Activated CD4-positive, alpha-beta memory T cell treated with anti-CD3 and anti-CD28 coated beads for 36 hours (primary cell): ENCODE measurements at regions of chr9 and their contacts with region 1.

Region 1: DNA sequence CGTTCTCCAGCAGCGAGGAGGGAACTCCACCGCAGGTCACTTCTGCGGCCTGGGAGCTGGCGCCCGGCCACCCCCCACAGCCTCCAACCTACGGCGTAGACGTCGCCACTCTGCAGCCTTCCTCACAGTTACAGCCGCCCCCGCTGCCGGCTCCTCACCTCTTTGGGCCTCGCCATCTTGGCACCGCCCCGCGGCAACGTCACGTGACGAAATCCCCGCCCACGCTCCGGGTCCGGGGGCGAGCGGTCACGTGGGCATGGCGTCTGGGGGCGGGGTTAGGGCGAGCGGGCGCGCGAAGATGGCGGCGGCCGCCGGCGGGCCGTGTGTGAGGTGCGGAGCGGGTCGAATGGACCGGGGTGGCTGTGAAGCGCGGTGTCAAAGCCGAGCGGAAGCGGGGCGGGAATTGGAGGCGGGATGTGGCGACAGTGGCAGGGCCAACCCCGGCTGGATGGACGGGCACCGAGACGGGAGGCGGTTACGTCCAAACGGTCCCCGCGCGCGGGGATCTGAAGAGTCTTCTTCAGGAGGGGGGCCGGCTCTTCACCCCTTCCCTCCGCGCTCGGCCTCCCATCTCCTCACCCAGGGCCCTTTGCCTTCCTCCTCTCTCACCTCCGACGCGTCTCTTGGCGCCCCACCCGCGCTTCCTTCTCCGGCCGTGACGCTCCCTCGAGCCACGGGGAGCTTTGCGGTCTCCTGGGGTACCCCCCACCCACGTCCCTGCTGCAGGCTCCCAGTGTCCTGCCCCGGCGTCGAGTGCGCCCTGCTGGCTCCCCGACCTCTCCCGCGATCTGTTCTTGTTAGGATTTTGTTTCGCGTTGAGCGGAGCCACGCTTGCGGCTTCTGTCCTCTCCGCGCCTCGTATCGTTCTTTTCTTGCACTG is at the starts of genes DOLK and NUP188:
- DNase-seq: peak; percentile 98
- H3K4me3 Mint-ChIP-seq: peak within 1 kb of the TSS; percentile 98
- H3K27ac Mint-ChIP-seq: peak within 1 kb of the TSS; percentile 98
- H3K4me1 Mint-ChIP-seq: peaks cover 27% of the 10 kb centered on the region
- H3K27me3 Mint-ChIP-seq: no peaks in the 10 kb centered on the region
- total RNA-seq, gene DOLK: 5.7 to 6.7 TPM
- total RNA-seq, gene NUP188: 121 to 124 TPM

Region 2: DNA sequence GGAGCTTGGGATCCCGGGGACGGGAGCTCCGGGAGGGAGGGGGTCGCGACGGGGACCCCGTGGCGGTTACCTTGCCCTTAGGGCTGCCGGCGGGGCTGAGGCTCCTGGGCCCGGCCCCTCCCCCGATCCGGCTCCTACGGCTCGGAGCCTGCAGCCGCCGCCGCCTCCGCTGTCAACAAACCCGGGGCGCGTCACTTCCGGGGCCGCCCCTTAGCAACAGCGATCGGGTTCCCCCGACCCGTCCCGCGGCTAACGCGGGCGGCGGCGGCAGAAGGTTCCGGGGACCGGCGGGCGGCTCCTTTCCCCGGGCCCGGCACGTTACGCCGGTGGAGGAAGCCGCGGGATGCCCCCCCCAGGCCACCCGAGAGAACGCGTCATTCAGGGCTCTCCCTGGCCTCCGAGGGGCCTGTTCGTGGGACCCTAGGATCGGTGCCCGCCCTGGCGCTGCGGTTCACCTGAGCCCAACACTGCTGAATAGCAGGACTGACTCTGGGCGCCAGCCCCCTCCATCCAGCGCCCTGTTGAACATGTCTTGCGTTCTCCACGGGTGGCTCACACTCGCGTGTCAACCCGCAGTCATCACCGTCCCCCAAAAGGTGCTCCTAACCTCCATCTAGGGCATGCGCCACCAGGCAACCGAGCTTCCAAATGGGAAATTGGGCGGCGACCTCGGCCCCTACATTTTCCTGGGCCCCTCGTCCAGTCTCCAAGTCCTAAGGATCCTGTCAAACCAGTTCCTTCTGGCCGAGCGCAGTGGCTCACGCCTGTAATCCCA is 175.7 kb before region 1 on chr9 and contains the start of gene ZER1:
- CTCF ChIA-PET with region 1: no interaction called
- POLR2A ChIA-PET with region 1: no interaction called
- intact Hi-C with region 1: loop called (anchors 5 kb)
- DNase-seq: peak; percentile 95
- H3K4me3 Mint-ChIP-seq: peak within 1 kb of the TSS; percentile 94
- H3K27ac Mint-ChIP-seq: peak within 1 kb of the TSS; percentile 82
- H3K4me1 Mint-ChIP-seq: peaks cover 17% of the 10 kb centered on the region
- H3K27me3 Mint-ChIP-seq: no peaks in the 10 kb centered on the region
- total RNA-seq, gene ZER1: 16.2 to 18.0 TPM

Region 3: GRCh38 chr9:129028192-129028957 is 80.7 kb after region 1 on chr9 and contains the start of gene SH3GLB2:
- CTCF ChIA-PET with region 1: no interaction called
- POLR2A ChIA-PET with region 1: no interaction called
- intact Hi-C with region 1: loop called (anchors 1 kb)
- DNase-seq: peak; percentile 97
- H3K4me3 Mint-ChIP-seq: peak within 1 kb of the TSS; percentile 84
- H3K27ac Mint-ChIP-seq: peak within 1 kb of the TSS; percentile 55
- H3K4me1 Mint-ChIP-seq: peaks cover 22% of the 10 kb centered on the region
- H3K27me3 Mint-ChIP-seq: no peaks in the 10 kb centered on the region
- total RNA-seq, gene SH3GLB2: 59.5 to 62.3 TPM

Region 4: DNA sequence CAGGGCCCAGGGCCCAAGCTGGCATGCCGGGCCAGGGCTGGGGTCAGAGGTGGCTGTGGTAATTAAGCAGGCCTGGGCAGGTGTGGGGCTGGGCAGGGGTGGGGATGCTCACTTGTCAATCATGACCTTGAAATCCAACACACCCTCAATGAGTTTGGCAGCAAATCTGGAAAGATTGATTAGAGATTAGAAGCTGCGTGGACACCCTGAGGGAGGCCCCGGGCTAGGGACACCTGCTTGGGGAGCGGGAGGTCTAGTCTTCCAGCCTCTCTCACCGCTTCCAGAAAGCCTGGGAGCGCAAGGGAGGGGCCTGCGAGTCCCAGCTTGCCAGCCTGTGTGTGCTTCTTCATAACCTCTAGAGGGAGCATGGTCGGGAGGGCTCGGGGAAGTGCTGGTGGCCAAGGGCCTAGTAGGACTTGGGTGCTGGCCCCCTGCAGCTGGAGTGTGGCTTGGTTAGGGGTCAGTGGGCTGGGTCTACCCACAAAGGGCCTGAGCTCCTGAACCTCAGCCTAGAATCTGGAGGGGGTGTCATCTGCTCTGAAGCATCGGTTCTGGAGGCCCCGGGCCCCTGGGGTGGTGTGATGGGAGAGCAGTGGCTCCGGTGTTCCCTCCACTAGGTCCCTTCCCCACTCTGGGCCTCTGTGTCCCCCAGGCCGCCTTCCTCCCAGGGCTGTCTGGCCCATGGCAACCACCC is 155.4 kb after region 1 on chr9:
- CTCF ChIA-PET with region 1: no interaction called
- POLR2A ChIA-PET with region 1: no interaction called
- intact Hi-C with region 1: no loop called
- DNase-seq: peak; percentile 30
- H3K4me3 Mint-ChIP-seq: no peak overlapping the region
- H3K27ac Mint-ChIP-seq: no peak overlapping the region
- H3K4me1 Mint-ChIP-seq: no peaks in the 10 kb centered on the region
- H3K27me3 Mint-ChIP-seq: no peaks in the 10 kb centered on the region